ENCODE measurements at regions of chr9 and their contacts with region 1.

Region 1: GRCh38 chr9:15422372-15423230 is at the start of gene SNAPC3:
- DNase-seq: peak; percentile 90 to 99 (median 96)

Region 2: DNA sequence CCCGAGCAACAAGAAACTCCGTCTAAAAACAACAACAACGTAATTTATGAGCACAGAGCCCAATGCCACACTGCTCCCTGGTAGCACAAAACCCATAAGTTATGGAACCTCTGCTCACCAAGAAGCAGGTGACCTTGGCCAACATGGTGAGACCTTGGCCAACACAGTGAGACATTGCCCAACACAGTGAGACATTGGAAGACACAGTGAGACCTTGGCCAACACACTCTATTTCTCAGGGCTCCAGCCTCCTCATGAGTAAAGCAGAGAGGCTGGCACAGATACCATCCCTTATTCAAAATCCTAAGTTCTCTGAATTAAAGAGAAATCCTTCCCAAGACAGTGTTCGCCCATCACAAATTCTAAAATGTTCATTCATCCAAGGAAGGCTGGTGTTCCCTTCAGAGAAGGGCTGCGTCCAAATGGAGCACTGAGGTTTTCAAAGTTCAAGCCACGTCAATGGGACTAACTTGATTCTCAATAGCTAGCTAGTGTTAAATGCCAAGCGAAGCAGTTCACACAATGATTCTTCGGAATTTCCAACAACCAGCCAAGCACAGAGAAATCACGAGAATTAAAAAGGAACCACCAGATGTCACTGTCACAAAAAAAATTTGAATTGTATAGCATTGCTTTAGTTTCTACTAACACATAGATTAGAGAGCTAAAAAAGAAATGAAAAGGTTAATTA is 145.1 kb before region 1 on chr9:
- intact Hi-C with region 1: loop called (anchors 10 kb)
- DNase-seq: peak in 17 of 42 donors; percentile 7 to 73 (median 36)

Region 3: DNA sequence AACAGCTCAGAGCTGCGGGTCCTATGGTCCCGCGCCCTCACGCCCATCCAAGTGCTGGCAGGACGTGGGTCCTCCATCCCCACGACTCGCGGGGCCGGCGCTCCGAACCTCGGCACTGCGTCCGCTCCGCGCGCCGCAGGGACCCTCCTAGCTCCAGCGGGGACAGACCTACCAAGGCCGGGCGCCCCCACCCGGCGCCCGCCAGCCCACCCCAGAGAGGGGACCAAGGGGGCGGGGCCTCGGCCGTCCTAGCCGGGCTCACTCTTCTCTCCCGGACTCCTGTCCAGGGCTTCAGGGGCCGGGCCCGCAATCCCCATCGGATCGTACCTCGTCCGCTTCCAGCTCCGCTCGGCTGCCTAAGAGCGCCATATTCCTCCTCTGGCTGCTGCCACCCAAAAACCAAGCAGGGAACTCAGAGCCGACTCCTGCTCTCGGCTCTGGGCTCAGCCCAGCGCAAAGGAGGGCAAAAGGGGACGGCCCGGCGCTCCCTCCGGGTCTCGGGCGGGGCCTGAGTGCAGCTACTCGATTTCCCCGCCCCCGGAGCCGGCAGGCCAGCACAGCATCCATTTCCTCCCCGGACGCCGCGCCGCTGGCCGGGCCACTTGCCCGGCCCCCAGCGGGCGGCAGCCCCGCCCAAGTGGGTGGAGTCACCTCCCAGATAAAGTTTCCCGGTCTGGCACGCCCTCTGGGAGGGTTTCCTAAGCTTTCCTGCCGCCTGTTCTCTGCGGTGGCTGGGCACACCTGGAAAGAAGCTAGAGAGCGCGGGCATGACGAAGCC is 115.7 kb before region 1 on chr9 and contains the start of gene TTC39B:
- intact Hi-C with region 1: loop called (anchors 10 kb)
- DNase-seq: peak; percentile 46 to 93 (median 84)

Region 4: GRCh38 chr9:15510789-15511575 is 88.4 kb after region 1 on chr9 and contains the start of gene PSIP1:
- intact Hi-C with region 1: loop called (anchors 5 kb)
- DNase-seq: peak; percentile 53 to 89 (median 82)

Measured in head of caudate nucleus (tissue), 42 donors.